ENCODE measurements at regions of chr9 and their contacts with region 1.

Region 1: GRCh38 chr9:131206495-131206894 is 69.8 kb downstream of the FAM78A start:
- DNase-seq: no peak
- H3K4me3 ChIP-seq: no peak overlapping the region
- H3K27ac ChIP-seq: no peak overlapping the region
- H3K4me1 ChIP-seq: no peaks in the 10 kb centered on the region
- H3K27me3 ChIP-seq: no peaks in the 10 kb centered on the region
- CTCF ChIP-seq: no peak

Region 2: DNA sequence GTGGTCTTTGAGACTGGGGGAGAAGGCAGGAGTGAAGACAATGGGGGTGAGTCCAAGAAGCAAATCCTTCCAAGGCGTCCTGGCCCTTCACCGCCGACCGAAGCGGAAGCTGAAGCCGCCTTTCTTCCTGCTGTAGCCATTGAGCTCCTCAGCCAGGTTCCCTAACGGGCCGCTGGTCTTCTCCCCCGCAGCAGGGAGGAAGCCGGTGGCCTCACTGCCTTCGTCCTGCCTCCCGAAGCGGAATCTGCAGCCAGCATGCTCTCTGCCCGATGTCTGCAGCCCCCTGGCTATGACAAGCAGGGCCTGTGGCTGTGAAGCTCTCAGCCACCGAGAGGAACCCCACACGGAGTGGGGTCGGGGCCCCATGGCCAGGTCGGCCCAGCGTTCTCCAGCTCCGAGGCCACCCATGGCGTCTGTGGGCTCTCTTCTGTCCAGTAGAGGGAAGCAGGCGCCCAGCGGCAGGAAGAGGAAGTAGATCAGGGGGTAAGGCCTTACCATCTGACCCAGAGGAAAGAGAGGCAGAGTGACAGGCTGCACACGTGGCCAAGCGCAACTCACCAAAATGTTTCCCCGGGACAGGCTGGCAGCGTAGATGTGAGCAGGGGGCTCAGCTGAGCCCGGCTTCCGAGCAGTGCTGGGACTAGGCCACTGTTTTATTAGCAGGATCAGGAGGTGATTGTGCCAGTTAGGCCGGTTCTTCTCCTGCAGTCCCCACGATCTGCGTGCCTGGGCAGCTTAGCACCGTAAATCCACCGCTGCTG is 313.0 kb before region 1 on chr9:
- CTCF ChIA-PET with region 1: no interaction called
- POLR2A ChIA-PET with region 1: no interaction called
- intact Hi-C with region 1: no loop called
- DNase-seq: no peak
- H3K4me3 ChIP-seq: no peak overlapping the region
- H3K27ac ChIP-seq: no peak overlapping the region
- H3K4me1 ChIP-seq: no peaks in the 10 kb centered on the region
- H3K27me3 ChIP-seq: no peaks in the 10 kb centered on the region
- CTCF ChIP-seq: no peak

Region 3: DNA sequence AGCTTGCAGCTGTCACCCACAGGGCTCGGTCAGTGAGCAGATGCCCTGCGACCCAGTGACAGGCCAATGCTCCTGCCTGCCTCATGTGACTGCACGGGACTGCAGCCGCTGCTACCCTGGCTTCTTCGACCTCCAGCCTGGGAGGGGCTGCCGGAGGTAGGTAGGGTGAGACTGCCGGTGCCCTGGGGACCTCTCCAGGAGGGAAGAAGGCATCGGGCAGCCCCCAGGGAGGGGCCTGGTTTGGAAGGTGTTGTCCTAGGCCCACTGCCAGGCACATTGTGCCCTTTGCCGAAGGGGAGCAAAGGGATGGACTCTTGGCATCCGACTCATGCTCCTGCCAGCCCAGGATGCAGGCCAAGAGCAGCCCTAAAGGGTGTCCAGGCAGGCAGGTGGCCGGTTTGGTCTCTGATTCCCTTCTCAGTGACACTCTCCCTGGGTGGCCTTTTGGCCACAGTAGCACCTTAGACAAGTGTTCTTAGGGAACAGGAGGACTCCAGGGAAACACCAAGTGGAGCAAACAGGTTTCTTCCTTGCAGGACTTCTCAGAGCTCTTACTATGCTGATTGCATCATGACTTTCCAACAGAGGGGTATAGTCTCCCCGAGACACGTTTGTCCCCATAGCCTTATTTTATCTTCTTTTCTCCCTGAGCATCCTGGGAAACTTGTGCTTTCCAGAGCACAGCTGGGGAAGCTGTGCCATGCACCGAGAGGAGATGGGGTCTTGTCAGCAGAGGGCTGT is 138.2 kb before region 1 on chr9:
- CTCF ChIA-PET with region 1: no interaction called
- POLR2A ChIA-PET with region 1: no interaction called
- intact Hi-C with region 1: no loop called
- DNase-seq: no peak
- H3K4me3 ChIP-seq: no peak overlapping the region
- H3K27ac ChIP-seq: no peak overlapping the region
- H3K4me1 ChIP-seq: no peaks in the 10 kb centered on the region
- H3K27me3 ChIP-seq: no peaks in the 10 kb centered on the region
- CTCF ChIP-seq: no peak

Region 4: DNA sequence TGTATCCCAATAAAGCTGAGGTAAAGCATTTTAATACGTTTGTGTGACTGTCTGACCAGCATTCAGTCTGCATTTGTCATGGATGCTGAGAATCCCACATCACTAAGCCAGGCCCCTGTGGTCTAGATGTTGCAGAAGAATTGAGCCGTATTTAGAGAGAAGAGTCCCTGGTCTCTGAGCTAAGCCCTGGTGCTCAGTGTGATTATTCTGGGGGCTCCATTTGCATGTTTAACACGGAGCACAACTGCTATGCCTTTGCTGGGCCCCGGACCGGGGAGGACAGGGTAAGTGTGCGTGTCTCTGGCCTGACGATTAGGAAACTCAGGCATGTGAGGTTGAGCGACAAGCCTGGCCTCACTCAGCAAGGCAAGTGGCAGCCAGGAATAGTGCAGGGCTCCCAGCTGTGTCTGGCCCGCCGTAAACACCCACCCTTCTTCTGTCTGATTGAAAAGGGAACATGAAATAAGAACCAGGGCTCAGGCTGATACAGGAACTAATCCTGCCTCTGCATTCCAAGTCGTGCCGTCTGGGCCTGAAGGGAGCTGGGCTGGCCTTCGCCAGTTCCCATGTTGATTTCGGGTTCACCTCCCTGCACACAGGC is 47.5 kb after region 1 on chr9:
- CTCF ChIA-PET with region 1: interaction called, 6 read pairs
- POLR2A ChIA-PET with region 1: no interaction called
- intact Hi-C with region 1: loop called (anchors 5 kb)
- DNase-seq: peak; percentile 53
- H3K4me3 ChIP-seq: no peak overlapping the region
- H3K27ac ChIP-seq: peak overlapping the region; percentile 94
- H3K4me1 ChIP-seq: peaks cover 43% of the 10 kb centered on the region
- H3K27me3 ChIP-seq: no peaks in the 10 kb centered on the region
- CTCF ChIP-seq: no peak

Region 5: GRCh38 chr9:131464354-131465000 is 258.0 kb after region 1 on chr9:
- CTCF ChIA-PET with region 1: no interaction called
- POLR2A ChIA-PET with region 1: interaction called, 10 read pairs
- intact Hi-C with region 1: no loop called
- DNase-seq: no peak
- H3K4me3 ChIP-seq: no peak overlapping the region
- H3K27ac ChIP-seq: no peak overlapping the region
- H3K4me1 ChIP-seq: no peaks in the 10 kb centered on the region
- H3K27me3 ChIP-seq: no peaks in the 10 kb centered on the region
- CTCF ChIP-seq: no peak

Region 6: GRCh38 chr9:131618071-131618479 is 411.6 kb after region 1 on chr9:
- CTCF ChIA-PET with region 1: no interaction called
- POLR2A ChIA-PET with region 1: no interaction called
- intact Hi-C with region 1: no loop called
- DNase-seq: peak; percentile 61
- H3K4me3 ChIP-seq: no peak overlapping the region
- H3K27ac ChIP-seq: no peak overlapping the region
- H3K4me1 ChIP-seq: no peaks in the 10 kb centered on the region
- H3K27me3 ChIP-seq: no peaks in the 10 kb centered on the region
- CTCF ChIP-seq: no peak

Region 7: GRCh38 chr9:131697908-131698714 is 491.6 kb after region 1 on chr9:
- CTCF ChIA-PET with region 1: no interaction called
- POLR2A ChIA-PET with region 1: no interaction called
- intact Hi-C with region 1: no loop called
- DNase-seq: no peak
- H3K4me3 ChIP-seq: no peak overlapping the region
- H3K27ac ChIP-seq: no peak overlapping the region
- H3K4me1 ChIP-seq: peaks cover 25% of the 10 kb centered on the region
- H3K27me3 ChIP-seq: no peaks in the 10 kb centered on the region
- CTCF ChIP-seq: no peak

Measured in A673 (cell line).